ENCODE measurements at regions of chr14 and their contacts with region 1.

Region 1: DNA sequence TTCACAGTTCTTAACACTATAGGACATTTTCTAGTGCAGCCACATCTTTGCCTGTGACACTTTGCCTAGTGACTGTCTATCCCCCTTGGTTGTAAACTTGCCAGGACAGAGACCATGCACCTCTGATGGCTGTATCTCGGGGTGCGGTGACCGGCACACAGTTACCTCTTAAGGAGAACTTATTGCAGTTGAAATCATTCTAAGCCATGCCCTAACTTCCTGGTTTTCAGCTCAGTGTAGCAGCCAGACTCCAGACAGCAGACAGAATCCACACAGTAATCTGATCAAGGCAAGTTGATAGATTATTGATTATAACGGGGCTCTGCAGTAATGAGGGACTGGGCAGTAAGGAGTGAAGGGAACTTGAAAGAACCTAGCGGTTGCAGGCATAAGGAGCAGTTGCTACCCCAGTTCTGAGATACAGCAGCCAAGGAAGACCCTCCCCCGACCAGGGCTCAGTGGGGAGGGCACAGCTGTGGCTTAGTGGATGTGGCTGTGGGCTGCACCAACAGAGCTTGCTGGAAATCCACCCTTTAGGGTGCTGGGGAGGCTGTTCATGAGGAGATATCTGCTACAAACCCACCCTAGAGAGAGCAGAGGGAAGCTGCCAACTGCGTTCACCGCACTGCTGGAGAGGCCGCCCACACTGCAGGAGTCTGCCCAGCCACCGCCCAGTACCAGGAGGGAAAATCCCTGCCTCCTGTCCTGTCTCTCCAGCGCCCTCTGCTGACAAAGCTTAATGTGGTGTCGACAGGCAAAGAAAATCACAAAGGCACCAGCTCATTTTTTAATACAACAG is 58.2 kb upstream of the BEGAIN start:
- DNase-seq: peak; percentile 65 to 91 (median 89)
- ATAC-seq: peak; percentile 88
- H3K4me3 ChIP-seq: no peak overlapping the region
- H3K4me3 Mint-ChIP-seq: no peak overlapping the region
- H3K27ac ChIP-seq: no peak overlapping the region
- H3K27ac Mint-ChIP-seq: peak overlapping the region; percentile 14
- H3K4me1 ChIP-seq: peaks cover 46% of the 10 kb centered on the region
- H3K4me1 Mint-ChIP-seq: peaks cover 46% of the 10 kb centered on the region
- H3K27me3 ChIP-seq: no peaks in the 10 kb centered on the region
- H3K27me3 Mint-ChIP-seq: no peaks in the 10 kb centered on the region
- CTCF ChIP-seq: peak; percentile 72

Region 2: GRCh38 chr14:100383727-100384158 is 261.6 kb before region 1 on chr14:
- CTCF ChIA-PET with region 1: interaction called, 188 read pairs
- POLR2A ChIA-PET with region 1: interaction called, 3 read pairs
- intact Hi-C with region 1: loop called (anchors 1 kb)
- DNase-seq: peak; percentile 38 to 79 (median 67)
- ATAC-seq: peak; percentile 93
- H3K4me3 ChIP-seq: no peak overlapping the region
- H3K4me3 Mint-ChIP-seq: no peak overlapping the region
- H3K27ac ChIP-seq: no peak overlapping the region
- H3K27ac Mint-ChIP-seq: no peak overlapping the region
- H3K4me1 ChIP-seq: peaks cover 10% of the 10 kb centered on the region
- H3K4me1 Mint-ChIP-seq: peaks cover 16% of the 10 kb centered on the region
- H3K27me3 ChIP-seq: no peaks in the 10 kb centered on the region
- H3K27me3 Mint-ChIP-seq: no peaks in the 10 kb centered on the region
- CTCF ChIP-seq: peak; percentile 82

Region 3: DNA sequence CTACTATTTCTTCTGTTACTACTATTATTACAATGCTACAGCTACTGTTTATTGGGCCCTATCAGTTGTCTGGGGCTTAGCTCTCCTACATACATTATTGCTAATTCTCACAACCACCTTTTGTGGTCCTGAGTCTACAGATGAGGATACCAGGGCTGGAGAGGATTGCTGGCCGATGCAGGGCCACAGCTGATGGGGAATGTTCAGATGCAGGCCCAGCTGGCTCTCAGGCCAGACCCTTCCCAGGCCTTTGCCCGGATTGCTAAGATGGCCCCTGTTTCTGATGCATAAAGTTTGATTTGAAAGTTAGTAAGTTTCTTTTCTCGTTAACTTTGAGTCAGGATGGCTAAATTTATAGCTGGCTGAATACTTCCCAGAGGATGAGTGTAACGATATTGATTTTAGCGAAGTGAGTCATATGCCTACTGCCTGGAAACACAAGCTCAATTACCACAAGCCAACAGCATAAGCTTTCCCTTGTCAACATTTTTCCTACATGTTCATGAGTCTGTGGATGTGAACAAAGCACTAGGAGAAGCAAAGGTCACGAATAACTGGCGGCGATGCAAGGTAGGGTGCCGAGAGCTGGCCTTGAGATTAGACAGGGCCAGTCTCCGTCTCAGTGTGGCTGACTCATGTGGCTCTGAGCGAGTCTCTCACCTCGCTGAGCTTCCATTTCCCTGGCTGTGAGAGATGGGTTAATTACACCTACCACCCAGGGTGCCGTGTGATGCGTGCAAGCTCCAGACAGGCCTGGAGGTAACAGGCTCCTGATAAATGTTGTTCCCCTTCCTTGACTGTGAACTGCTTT is 169.2 kb before region 1 on chr14:
- CTCF ChIA-PET with region 1: interaction called, 10 read pairs
- POLR2A ChIA-PET with region 1: no interaction called
- intact Hi-C with region 1: no loop called
- DNase-seq: no peak
- ATAC-seq: no peak
- H3K4me3 ChIP-seq: no peak overlapping the region
- H3K4me3 Mint-ChIP-seq: no peak overlapping the region
- H3K27ac ChIP-seq: no peak overlapping the region
- H3K27ac Mint-ChIP-seq: no peak overlapping the region
- H3K4me1 ChIP-seq: no peaks in the 10 kb centered on the region
- H3K4me1 Mint-ChIP-seq: no peaks in the 10 kb centered on the region
- H3K27me3 ChIP-seq: no peaks in the 10 kb centered on the region
- H3K27me3 Mint-ChIP-seq: no peaks in the 10 kb centered on the region
- CTCF ChIP-seq: no peak

Region 4: DNA sequence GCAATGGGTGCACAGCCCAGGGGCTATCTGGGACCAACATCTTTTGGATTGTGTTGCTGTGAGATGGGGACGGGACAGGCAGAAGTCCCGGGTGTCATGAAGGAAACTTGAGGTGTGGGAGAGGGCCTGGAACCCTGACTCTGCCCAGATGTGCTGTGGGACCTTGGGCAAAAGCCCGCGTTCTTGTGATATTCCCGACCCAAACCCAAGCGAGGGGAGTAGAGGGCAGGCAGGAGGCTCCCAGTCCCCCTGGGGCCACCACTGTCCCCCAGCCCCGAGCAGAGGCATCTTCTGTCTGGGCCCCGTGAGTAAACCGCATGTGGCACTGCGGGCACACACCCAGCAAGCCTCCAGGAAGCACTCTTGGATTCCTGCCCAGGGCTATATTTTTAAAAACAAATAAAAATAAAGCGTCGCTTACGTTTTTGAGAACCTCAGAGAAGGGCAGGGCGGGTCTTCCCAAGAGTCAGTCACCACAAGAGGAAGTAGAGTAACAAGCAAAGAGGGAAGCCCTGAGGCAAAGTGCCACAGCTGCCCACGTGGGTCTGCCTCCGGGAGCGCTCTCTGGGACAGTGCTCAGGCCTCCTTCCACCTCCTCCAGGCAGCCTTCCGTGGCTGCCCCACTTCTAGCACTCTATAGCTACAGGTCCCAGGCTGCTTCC is 97.6 kb before region 1 on chr14:
- CTCF ChIA-PET with region 1: interaction called, 10 read pairs
- POLR2A ChIA-PET with region 1: interaction called, 6 read pairs
- intact Hi-C with region 1: loop called (anchors 1 to 5 kb)
- DNase-seq: peak; percentile 8 to 91 (median 51)
- ATAC-seq: peak; percentile 52
- H3K4me3 ChIP-seq: peak overlapping the region in 1 of 2 experiments; percentile 68
- H3K4me3 Mint-ChIP-seq: peak overlapping the region; percentile 57
- H3K27ac ChIP-seq: peak overlapping the region; percentile 64 to 67
- H3K27ac Mint-ChIP-seq: peak overlapping the region; percentile 88
- H3K4me1 ChIP-seq: peaks cover 36% of the 10 kb centered on the region
- H3K4me1 Mint-ChIP-seq: peaks cover 24% of the 10 kb centered on the region
- H3K27me3 ChIP-seq: no peaks in the 10 kb centered on the region
- H3K27me3 Mint-ChIP-seq: no peaks in the 10 kb centered on the region
- CTCF ChIP-seq: no peak

Region 5: GRCh38 chr14:100617410-100618317 is 27.7 kb before region 1 on chr14:
- CTCF ChIA-PET with region 1: interaction called, 14 read pairs
- POLR2A ChIA-PET with region 1: no interaction called
- intact Hi-C with region 1: no loop called
- DNase-seq: peak in 2 of 9 experiments; percentile 48 to 67
- ATAC-seq: no peak
- H3K4me3 ChIP-seq: no peak overlapping the region
- H3K4me3 Mint-ChIP-seq: peak overlapping the region; percentile 27
- H3K27ac ChIP-seq: no peak overlapping the region
- H3K27ac Mint-ChIP-seq: peak overlapping the region; percentile 67
- H3K4me1 ChIP-seq: peaks cover 22% of the 10 kb centered on the region
- H3K4me1 Mint-ChIP-seq: peaks cover 20% of the 10 kb centered on the region
- H3K27me3 ChIP-seq: peaks cover 0 to 3% of the 10 kb centered on the region in 2 experiments
- H3K27me3 Mint-ChIP-seq: peaks cover 6% of the 10 kb centered on the region
- CTCF ChIP-seq: no peak

Region 6: GRCh38 chr14:100783630-100784370 is 138.4 kb after region 1 on chr14:
- CTCF ChIA-PET with region 1: no interaction called
- POLR2A ChIA-PET with region 1: no interaction called
- intact Hi-C with region 1: no loop called
- DNase-seq: no peak
- ATAC-seq: no peak
- H3K4me3 ChIP-seq: no peak overlapping the region
- H3K4me3 Mint-ChIP-seq: no peak overlapping the region
- H3K27ac ChIP-seq: no peak overlapping the region
- H3K27ac Mint-ChIP-seq: no peak overlapping the region
- H3K4me1 ChIP-seq: no peaks in the 10 kb centered on the region
- H3K4me1 Mint-ChIP-seq: no peaks in the 10 kb centered on the region
- H3K27me3 ChIP-seq: no peaks in the 10 kb centered on the region
- H3K27me3 Mint-ChIP-seq: peaks cover 6% of the 10 kb centered on the region
- CTCF ChIP-seq: no peak

Region 7: DNA sequence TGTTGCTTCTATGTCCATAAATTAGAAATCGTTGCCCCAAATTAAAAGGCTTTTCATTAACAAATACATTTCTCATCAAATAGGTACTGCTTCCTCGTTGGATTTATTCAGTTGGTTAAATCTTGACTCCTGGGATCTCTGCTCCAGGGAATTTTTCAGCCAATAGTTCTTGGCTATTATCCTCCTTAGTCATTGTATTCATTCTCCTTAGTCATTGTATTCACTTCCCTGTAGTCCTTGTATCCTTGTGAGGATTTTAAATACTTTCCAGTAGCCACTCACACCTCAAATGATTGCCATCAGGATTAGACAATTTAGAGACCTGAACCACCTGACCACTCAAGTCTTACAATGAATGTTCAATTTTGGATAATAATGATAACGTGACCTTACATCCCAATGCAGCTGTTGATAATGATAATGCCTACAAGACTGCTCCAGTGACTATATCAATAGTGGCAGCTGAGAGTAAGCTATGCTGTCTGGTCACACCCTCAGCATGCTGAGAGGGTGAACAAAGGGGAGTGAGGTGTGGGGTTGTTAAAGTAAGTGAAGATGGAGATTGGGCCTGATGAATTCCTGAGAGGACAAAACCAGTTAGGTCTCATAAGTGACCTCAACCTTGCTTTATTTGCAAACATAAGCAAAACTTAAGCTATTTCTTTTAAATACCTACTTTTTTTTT is 451.9 kb after region 1 on chr14:
- CTCF ChIA-PET with region 1: no interaction called
- POLR2A ChIA-PET with region 1: no interaction called
- intact Hi-C with region 1: no loop called
- DNase-seq: peak in 1 of 9 experiments; percentile 6
- ATAC-seq: no peak
- H3K4me3 ChIP-seq: no peak overlapping the region
- H3K4me3 Mint-ChIP-seq: no peak overlapping the region
- H3K27ac ChIP-seq: no peak overlapping the region
- H3K27ac Mint-ChIP-seq: no peak overlapping the region
- H3K4me1 ChIP-seq: no peaks in the 10 kb centered on the region
- H3K4me1 Mint-ChIP-seq: no peaks in the 10 kb centered on the region
- H3K27me3 ChIP-seq: peaks cover 0 to 4% of the 10 kb centered on the region in 2 experiments
- H3K27me3 Mint-ChIP-seq: peaks cover 16% of the 10 kb centered on the region
- CTCF ChIP-seq: no peak

Region 8: GRCh38 chr14:101301011-101301410 is 655.6 kb after region 1 on chr14:
- CTCF ChIA-PET with region 1: no interaction called
- POLR2A ChIA-PET with region 1: no interaction called
- intact Hi-C with region 1: no loop called
- DNase-seq: no peak
- ATAC-seq: no peak
- H3K4me3 ChIP-seq: no peak overlapping the region
- H3K4me3 Mint-ChIP-seq: no peak overlapping the region
- H3K27ac ChIP-seq: no peak overlapping the region
- H3K27ac Mint-ChIP-seq: no peak overlapping the region
- H3K4me1 ChIP-seq: no peaks in the 10 kb centered on the region
- H3K4me1 Mint-ChIP-seq: no peaks in the 10 kb centered on the region
- H3K27me3 ChIP-seq: no peaks in the 10 kb centered on the region
- H3K27me3 Mint-ChIP-seq: peaks cover 21% of the 10 kb centered on the region
- CTCF ChIP-seq: no peak

Measured in CD8-positive, alpha-beta T cell (primary cell).